IMR-90 (cell line): ENCODE measurements at regions of chr5 and their contacts with region 1.

Region 1: DNA sequence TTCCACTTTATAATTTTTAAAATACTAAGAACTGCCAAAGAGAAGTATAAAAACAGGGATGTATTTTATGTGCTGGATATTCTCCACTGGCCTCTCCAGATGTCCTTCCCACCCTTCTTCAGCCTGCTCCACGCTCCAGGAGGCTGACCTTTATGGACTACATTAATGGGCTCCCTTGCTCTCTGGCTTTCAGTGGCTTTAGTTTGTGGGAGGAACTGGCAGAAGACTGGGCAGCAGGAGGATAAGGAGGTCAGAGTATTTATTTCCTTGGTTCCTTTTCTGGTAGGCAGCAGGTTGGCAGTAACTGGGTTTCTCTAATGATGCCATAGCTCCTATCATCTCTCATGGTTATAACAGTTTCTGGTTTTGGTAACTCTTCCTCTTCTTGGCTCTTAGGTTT is 133.9 kb downstream of the PAM start:
- DNase-seq: no peak
- ATAC-seq: no peak
- H3K4me3 ChIP-seq: no peak overlapping the region
- H3K27ac ChIP-seq: no peak overlapping the region
- H3K4me1 ChIP-seq: no peaks in the 10 kb centered on the region
- H3K27me3 ChIP-seq: no peaks in the 10 kb centered on the region
- CTCF ChIP-seq: no peak
- POLR2A ChIP-seq: no peak
- RAD21 ChIP-seq: no peak

Region 2: GRCh38 chr5:102930244-102930643 is 41.2 kb after region 1 on chr5:
- CTCF ChIA-PET with region 1: no interaction called
- POLR2A ChIA-PET with region 1: no interaction called
- dilution Hi-C with region 1: no loop called
- in situ Hi-C with region 1: no loop called
- intact Hi-C with region 1: no loop called
- DNase-seq: no peak
- ATAC-seq: no peak
- H3K4me3 ChIP-seq: no peak overlapping the region
- H3K27ac ChIP-seq: no peak overlapping the region
- H3K4me1 ChIP-seq: no peaks in the 10 kb centered on the region
- H3K27me3 ChIP-seq: no peaks in the 10 kb centered on the region
- CTCF ChIP-seq: no peak
- POLR2A ChIP-seq: no peak
- RAD21 ChIP-seq: no peak

Region 3: DNA sequence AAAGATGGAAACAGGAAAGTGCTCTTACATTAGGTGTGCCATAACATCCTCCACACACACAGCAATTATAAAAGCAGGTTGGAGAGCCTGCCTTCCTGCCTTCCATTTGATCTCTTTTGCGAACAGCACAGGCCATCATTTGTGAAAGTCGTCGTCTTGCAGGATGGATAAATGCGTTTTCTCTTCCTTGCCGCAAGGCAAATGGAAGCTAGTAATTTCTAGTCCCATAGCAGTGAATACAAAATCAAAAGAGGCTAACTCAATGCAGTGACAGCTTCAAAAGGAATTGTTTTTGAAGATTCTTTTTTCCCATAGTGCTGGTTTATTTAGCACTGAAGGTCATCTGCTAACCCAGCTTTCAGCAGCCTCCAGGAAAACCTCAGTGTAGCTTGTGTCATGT is 52.1 kb after region 1 on chr5:
- CTCF ChIA-PET with region 1: no interaction called
- POLR2A ChIA-PET with region 1: no interaction called
- dilution Hi-C with region 1: no loop called
- in situ Hi-C with region 1: no loop called
- intact Hi-C with region 1: loop called (anchors 5 kb)
- DNase-seq: no peak
- ATAC-seq: no peak
- H3K4me3 ChIP-seq: no peak overlapping the region
- H3K27ac ChIP-seq: no peak overlapping the region
- H3K4me1 ChIP-seq: no peaks in the 10 kb centered on the region; the same call in 1 of the 2 replicates
- H3K27me3 ChIP-seq: no peaks in the 10 kb centered on the region
- CTCF ChIP-seq: no peak
- POLR2A ChIP-seq: no peak
- RAD21 ChIP-seq: no peak